MCF 10A (cell line): ENCODE measurements at regions of chr7 and their contacts with region 1.

Region 1: DNA sequence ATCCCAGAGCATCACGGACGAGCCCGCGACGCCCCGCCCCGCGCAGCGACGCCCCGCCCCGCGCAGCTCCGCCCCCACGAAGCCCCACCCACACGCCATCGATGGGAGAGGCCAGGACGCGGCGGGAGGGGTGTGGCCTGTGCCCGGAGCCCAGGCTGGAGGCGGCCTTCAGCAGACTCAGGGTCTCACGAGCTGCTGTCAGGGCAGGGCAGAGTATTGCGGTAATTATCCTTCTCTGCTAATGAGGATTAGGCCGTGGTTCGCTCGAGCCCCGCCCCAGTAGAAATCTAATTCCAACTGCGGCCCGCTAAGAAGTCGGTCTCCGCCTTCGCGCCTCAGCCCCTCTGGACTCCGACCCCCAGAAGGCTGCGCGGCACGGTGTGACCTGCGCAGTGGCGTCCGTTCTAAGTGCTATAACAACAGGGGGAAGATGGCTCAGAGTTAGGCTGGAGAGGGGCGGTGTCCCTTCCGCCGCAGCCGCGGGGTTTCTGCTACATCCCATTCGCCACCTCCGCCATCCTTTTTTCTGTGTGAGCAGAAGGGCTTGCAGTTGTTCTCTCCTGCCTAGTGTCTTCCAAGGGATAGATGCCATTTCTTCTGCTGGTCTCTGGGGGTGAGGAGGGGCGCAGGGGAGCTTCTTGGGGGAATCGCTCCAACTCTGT is 337 bp upstream of the NT5C3A start:
- DNase-seq: peak; percentile 92
- H3K4me3 Mint-ChIP-seq: peak overlapping the region; percentile 97
- H3K27ac Mint-ChIP-seq: peak overlapping the region; percentile 90
- H3K4me1 Mint-ChIP-seq: peaks cover 22% of the 10 kb centered on the region
- H3K27me3 Mint-ChIP-seq: no peaks in the 10 kb centered on the region
- CTCF ChIP-seq: no peak

Region 2: GRCh38 chr7:32415936-32416335 is 647.0 kb before region 1 on chr7:
- CTCF ChIA-PET with region 1: no interaction called
- POLR2A ChIA-PET with region 1: no interaction called
- intact Hi-C with region 1: no loop called
- DNase-seq: peak; percentile 22
- H3K4me3 Mint-ChIP-seq: no peak overlapping the region
- H3K27ac Mint-ChIP-seq: no peak overlapping the region
- H3K4me1 Mint-ChIP-seq: no peaks in the 10 kb centered on the region
- H3K27me3 Mint-ChIP-seq: peaks cover 16% of the 10 kb centered on the region
- CTCF ChIP-seq: no peak

Region 3: GRCh38 chr7:32942786-32943653 is 119.9 kb before region 1 on chr7:
- CTCF ChIA-PET with region 1: interaction called, 3 read pairs
- POLR2A ChIA-PET with region 1: interaction called, 21 read pairs
- intact Hi-C with region 1: loop called (anchors 10 kb)
- DNase-seq: peak; percentile 80
- H3K4me3 Mint-ChIP-seq: peak overlapping the region; percentile 85
- H3K27ac Mint-ChIP-seq: peak overlapping the region; percentile 83
- H3K4me1 Mint-ChIP-seq: peaks cover 22% of the 10 kb centered on the region
- H3K27me3 Mint-ChIP-seq: no peaks in the 10 kb centered on the region
- CTCF ChIP-seq: peak; percentile 28

Region 4: DNA sequence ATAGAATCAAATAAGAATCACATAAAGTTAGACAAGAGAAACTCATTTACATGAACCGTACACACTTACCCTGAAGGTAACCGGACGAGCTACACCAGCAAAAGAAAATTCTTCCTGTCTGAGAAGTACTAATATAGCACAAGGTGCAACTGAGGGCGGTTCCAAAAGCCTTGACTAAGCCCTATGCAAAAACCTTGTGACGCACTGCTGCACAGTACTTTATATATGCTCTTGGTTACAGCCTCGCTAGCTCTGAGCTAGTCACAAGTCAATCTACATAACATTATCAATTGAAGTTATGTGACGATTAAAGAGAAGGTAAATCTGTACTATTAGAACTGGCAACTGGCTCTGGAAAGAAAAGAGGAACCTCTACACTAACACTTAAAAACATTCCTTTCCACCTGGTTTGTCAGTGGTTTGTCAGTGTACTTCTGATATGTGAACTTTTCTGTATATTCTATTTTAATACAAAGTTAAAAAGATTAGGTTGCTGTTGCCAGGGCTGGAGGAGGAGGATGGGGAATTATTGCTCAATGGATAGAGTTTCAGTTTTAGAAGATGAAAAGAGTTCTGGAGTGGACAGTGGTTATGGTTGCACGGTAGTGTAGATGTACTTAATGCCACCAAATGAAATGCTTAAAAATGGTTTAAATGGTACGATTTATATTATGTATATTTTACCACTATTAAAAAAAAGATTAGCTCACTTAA is 22.0 kb before region 1 on chr7:
- CTCF ChIA-PET with region 1: interaction called, 9 read pairs
- POLR2A ChIA-PET with region 1: interaction called, 115 read pairs
- intact Hi-C with region 1: loop called (anchors 2 kb)
- DNase-seq: peak; percentile 86
- H3K4me3 Mint-ChIP-seq: peak overlapping the region; percentile 65
- H3K27ac Mint-ChIP-seq: peak overlapping the region; percentile 76
- H3K4me1 Mint-ChIP-seq: peaks cover 18% of the 10 kb centered on the region
- H3K27me3 Mint-ChIP-seq: no peaks in the 10 kb centered on the region
- CTCF ChIP-seq: no peak